Ovary (tissue), 10 donors: ENCODE measurements at regions of chr2 and their contacts with region 1.

Region 1: DNA sequence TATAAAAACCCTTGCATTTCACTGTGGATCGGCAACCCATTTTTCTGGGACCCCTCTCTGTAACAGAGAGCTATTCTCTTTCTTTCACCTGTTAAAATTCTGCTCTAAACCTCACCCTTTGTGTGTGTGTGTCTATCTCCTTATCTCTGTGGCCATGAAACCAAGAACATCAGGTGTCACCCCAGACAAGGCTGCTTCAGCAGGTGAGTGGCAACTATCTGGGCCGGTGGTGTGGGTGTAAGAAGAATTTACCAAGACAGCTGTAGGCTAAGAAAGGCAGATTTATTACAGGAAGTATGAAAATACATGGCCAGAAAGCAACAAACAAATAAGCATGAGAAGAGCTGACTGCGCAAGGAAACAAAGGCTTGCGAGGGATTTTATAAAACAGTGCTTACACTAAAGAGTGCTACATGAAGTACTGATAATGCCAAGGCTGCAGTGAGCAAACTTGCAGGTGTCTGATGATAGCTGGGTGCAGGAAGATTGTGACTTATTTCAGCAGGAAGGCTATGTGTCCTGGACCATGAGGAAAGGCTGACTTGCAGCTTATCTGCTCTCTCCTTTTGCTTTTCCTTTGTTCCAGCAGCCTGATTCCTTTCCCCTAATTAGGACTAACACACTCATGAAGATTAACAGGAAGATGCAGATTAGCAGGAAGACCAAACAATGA is 421.1 kb downstream of the PTH2R start:
- DNase-seq: no peak
- H3K4me3 ChIP-seq: no peak overlapping the region
- H3K27ac ChIP-seq: no peak overlapping the region
- H3K4me1 ChIP-seq: no peaks in the 10 kb centered on the region
- H3K27me3 ChIP-seq: no peaks in the 10 kb centered on the region
- CTCF ChIP-seq: no peak
- EP300 ChIP-seq: no peak
- POLR2A ChIP-seq: no peak

Region 2: DNA sequence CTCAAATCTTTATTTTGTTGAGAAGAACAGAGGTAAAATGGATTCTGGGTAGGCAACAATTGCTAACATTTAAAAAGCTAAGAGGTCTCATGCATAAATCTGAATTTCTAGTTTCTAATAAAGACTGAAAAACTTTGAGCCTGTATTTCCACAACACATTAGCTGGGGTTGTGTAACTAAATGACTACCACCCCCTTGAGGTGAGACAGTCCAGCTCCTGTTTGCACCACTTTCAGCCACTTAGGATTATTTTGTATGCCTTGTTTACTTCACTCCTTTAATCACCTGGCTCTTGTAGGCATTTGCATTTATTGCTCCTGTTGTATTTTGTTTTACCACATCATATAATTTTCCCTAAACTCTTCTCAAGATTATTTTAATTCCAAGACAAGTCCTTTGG is 44.5 kb before region 1 on chr2:
- intact Hi-C with region 1: loop called in 1 of 4 experiments (anchors 2 kb)
- DNase-seq: no peak
- H3K4me3 ChIP-seq: no peak overlapping the region
- H3K27ac ChIP-seq: no peak overlapping the region
- H3K4me1 ChIP-seq: no peaks in the 10 kb centered on the region
- H3K27me3 ChIP-seq: no peaks in the 10 kb centered on the region
- CTCF ChIP-seq: no peak
- EP300 ChIP-seq: no peak
- POLR2A ChIP-seq: no peak

Region 3: DNA sequence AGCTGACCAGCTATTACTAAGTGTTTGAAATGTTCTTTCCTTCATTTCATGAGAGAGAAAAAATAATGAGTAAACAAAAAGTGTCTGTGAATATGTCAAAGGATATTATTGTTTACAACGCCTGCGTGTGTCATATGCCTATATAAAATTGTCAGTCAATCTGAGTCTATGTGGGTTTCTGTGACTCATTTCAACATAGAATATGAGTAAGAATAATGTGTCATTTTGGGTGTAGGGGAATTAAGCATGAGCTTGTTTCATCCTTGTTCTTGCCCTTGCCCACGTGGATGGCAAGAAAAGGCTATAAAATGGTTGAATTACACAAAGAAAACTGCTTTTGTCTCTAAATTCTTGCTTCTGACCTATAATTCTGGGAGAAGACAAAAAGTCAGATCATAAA is 44.9 kb after region 1 on chr2:
- intact Hi-C with region 1: no loop called
- DNase-seq: no peak
- H3K4me3 ChIP-seq: no peak overlapping the region
- H3K27ac ChIP-seq: no peak overlapping the region
- H3K4me1 ChIP-seq: no peaks in the 10 kb centered on the region
- H3K27me3 ChIP-seq: no peaks in the 10 kb centered on the region
- CTCF ChIP-seq: no peak
- EP300 ChIP-seq: no peak
- POLR2A ChIP-seq: no peak